ENCODE measurements at regions of chrX and their contacts with region 1.

Region 1: DNA sequence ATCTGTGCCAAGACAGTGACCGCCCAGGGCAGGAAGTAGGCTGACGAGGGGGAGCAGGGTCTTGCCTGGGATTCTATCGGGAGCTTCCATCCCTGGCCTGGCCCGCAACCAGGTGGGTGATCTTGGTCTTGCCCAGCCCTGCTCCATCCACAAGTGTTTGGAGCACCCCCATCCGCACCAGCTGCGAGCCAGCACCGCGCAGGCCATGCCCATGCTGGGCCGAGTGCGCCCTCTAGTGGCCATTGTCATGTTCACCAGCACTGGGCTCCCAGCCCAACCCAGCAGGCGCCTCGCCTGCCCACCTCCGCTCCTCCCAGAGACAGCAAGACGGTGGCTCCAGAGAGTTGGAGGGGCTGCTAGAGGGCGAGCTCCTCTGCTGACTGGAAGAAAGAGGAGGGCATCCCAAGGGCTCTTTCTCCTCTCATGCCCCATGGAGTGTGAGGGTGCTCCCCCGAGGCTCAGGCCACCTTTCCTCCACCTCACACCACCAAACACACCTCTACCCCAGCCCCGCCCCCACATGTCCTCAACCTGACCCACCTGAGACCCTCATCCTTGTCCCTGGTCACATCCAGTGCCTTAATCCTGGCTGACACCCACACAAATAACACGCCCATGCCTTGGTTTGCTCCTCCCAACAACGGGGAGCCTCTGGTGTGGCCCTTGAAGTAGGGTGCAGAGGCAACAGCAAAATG is 9.8 kb upstream of the ATP2B3 start:
- DNase-seq: peak; percentile 69 to 88
- ATAC-seq: peak; percentile 88 to 98
- H3K4me3 ChIP-seq: no peak overlapping the region
- H3K27ac ChIP-seq: peak overlapping the region in 1 of 2 experiments; percentile 48; a peak in 1 of 6 replicates
- H3K4me1 ChIP-seq: no peaks in the 10 kb centered on the region
- CTCF ChIP-seq: peak; percentile 84
- EP300 ChIP-seq: no peak
- POLR2A ChIP-seq: no peak
- RAD21 ChIP-seq: peak; percentile 88 to 89

Region 2: GRCh38 chrX:152941328-152942106 is 566.1 kb before region 1 on chrX:
- CTCF ChIA-PET with region 1: interaction called, 16 read pairs
- POLR2A ChIA-PET with region 1: no interaction called
- DNase-seq: peak; percentile 85 to 94
- ATAC-seq: peak; percentile 90 to 96
- H3K4me3 ChIP-seq: peak overlapping the region; percentile 62
- H3K27ac ChIP-seq: peak overlapping the region; percentile 85 to 96
- H3K4me1 ChIP-seq: peaks cover 8% of the 10 kb centered on the region; the same call in 1 of the 3 replicates
- CTCF ChIP-seq: peak; percentile 77
- EP300 ChIP-seq: no peak
- POLR2A ChIP-seq: peak; percentile 57
- RAD21 ChIP-seq: peak; percentile 76 to 95

Region 3: DNA sequence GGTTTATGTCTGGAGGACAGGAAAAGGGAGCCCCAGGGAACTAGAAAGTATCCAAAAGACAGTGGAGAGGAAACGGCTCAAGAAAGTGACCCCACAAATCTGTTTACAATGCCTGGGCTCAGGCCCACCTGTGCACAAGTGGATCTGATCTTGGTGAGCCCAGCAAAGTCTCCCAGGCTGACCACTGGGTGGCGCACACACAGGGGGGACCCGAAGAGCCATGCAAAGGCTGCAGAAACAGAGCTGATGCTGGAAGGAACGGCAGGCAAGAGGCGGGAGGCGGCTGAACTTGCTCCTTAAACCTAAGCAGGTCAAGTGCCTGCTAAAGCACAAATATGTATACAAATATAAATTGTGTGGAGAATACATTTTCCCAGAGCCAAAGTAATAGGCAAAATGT is 46.8 kb before region 1 on chrX:
- CTCF ChIA-PET with region 1: interaction called, 66 read pairs
- POLR2A ChIA-PET with region 1: no interaction called
- DNase-seq: peak; percentile 62 to 67
- ATAC-seq: peak; percentile 85 to 93; a peak in 5 of 6 replicates
- H3K4me3 ChIP-seq: no peak overlapping the region
- H3K27ac ChIP-seq: no peak overlapping the region
- H3K4me1 ChIP-seq: no peaks in the 10 kb centered on the region
- CTCF ChIP-seq: peak; percentile 59
- EP300 ChIP-seq: no peak
- POLR2A ChIP-seq: no peak
- RAD21 ChIP-seq: peak; percentile 25 to 49; a peak in 3 of 5 replicates

Region 4: GRCh38 chrX:153488231-153488914 is 19.3 kb before region 1 on chrX:
- CTCF ChIA-PET with region 1: interaction called, 36 read pairs
- POLR2A ChIA-PET with region 1: no interaction called
- DNase-seq: no peak
- ATAC-seq: no peak; a peak in 1 of 6 replicates
- H3K4me3 ChIP-seq: no peak overlapping the region
- H3K27ac ChIP-seq: peak overlapping the region in 1 of 2 experiments; percentile 50; a peak in 3 of 6 replicates
- H3K4me1 ChIP-seq: peaks cover 9% of the 10 kb centered on the region; the same call in 1 of the 3 replicates
- CTCF ChIP-seq: no peak
- EP300 ChIP-seq: no peak
- POLR2A ChIP-seq: no peak
- RAD21 ChIP-seq: no peak

Region 5: GRCh38 chrX:153539171-153539978 is 31.7 kb after region 1 on chrX:
- CTCF ChIA-PET with region 1: interaction called, 16 read pairs
- POLR2A ChIA-PET with region 1: no interaction called
- DNase-seq: peak; percentile 50 to 70
- ATAC-seq: peak; percentile 77 to 97
- H3K4me3 ChIP-seq: no peak overlapping the region
- H3K27ac ChIP-seq: no peak overlapping the region
- H3K4me1 ChIP-seq: no peaks in the 10 kb centered on the region
- CTCF ChIP-seq: peak; percentile 84
- EP300 ChIP-seq: no peak
- POLR2A ChIP-seq: no peak
- RAD21 ChIP-seq: peak; percentile 71 to 75

Measured in A549 (cell line).